ENCODE measurements at regions of chr5 and their contacts with region 1.

Region 1: DNA sequence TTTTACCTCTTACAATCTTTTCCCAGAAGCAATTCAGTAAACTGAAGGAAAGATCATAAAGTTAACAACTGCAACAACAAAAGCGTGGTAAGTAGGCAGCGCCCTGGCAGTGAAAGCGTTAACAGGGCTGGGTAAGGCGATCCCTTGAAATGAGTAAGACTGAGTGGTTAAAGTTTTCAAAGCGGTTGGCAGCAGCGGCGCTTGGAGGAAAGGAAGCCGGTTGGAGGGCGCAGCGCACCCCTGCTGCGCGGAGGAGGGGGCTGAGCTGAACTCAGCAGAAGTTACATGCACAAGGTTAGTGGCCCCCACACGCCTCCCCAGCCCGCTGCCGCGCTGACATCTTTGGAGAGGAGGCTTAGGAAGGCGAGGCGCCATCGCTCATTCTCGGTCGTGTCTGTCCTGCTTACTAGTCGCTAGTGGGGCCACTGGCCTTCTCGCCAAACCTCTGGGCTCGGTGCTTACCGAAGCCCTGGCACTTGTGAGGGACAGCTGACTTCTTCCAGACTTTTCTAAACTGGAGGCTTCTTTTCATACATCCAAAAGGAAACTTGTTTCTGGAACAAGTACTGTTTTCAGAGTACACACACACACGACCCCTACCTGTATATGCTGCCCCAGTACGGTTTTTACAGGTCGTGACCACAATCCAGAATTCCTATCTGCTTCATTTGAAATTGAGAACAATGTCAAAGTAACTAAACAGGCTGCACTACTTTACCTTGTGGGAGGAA is at the start of gene SH3RF2:
- DNase-seq: peak; percentile 85
- ATAC-seq: peak; percentile 54
- H3K4me3 ChIP-seq: peak within 1 kb of the TSS; percentile 60
- H3K27ac ChIP-seq: peak within 1 kb of the TSS; percentile 86
- H3K4me1 ChIP-seq: peaks cover 61 to 100% of the 10 kb centered on the region in 2 experiments
- H3K27me3 ChIP-seq: no peaks in the 10 kb centered on the region
- CTCF ChIP-seq: no peak
- POLR2A ChIP-seq: peak; percentile 69
- RAD21 ChIP-seq: no peak
- total RNA-seq, gene SH3RF2: 14.3 TPM

Region 2: DNA sequence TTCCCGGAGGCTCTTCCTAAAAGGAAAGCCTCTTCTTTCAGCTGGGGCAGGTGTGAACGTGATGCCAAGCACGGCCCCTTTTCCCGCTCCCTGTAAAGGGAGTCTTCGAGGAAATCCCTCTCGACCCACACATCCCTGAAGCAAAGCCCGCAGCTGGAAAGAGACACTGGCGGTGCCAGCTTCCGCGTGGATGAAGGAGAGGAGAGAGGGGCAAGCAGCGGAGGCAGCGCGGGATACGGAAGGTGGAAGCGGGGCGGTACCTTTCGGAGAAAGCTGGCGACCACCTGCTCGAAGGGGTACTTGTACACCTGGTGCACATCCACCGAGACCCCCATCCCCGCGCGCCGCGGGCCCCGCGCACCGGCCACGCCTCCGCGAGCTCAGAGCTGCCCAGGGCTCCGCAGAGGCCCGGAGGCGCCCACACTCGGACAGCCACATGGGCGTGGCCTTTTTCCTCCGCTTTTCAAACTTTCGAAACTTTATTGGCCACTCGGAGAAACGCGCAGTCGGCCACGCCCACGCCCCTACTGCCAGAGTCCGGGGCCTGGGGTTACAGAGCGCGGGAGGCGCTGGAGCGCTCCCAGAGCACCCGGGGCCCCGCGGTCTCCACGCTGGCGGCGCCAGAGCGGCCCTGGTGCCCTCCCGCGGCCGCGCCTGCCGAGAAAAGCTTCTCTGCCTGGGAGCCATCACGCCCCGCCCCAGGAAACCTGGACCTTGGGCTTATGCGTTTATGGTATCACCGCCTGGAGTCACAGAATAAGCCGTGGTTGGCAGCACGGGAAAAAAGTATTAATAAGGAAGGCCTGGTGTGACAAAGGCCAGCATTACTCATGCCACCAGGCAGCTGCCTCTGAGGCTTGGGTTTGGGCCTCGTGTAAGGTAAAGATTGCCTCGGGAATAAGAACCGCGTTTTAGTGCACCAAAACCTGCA is 101.4 kb before region 1 on chr5 and contains the start of gene PRELID2:
- CTCF ChIA-PET with region 1: no interaction called
- POLR2A ChIA-PET with region 1: no interaction called
- RAD21 ChIA-PET with region 1: no interaction called
- intact Hi-C with region 1: loop called (anchors 10 kb)
- DNase-seq: peak; percentile 79
- ATAC-seq: peak; percentile 90
- H3K4me3 ChIP-seq: peak within 1 kb of the TSS; percentile 75 to 78
- H3K27ac ChIP-seq: peak within 1 kb of the TSS; percentile 38
- H3K4me1 ChIP-seq: peaks cover 16 to 32% of the 10 kb centered on the region in 2 experiments
- H3K27me3 ChIP-seq: no peaks in the 10 kb centered on the region
- CTCF ChIP-seq: 0 out of 6 replicates have a peak, but pooled peaks of 1 of the 3 experiments have one; percentile 2
- POLR2A ChIP-seq: peak; percentile 31
- RAD21 ChIP-seq: peak; percentile 42; the same call in 1 of the 2 replicates
- total RNA-seq, gene PRELID2: 20.1 TPM

Region 3: DNA sequence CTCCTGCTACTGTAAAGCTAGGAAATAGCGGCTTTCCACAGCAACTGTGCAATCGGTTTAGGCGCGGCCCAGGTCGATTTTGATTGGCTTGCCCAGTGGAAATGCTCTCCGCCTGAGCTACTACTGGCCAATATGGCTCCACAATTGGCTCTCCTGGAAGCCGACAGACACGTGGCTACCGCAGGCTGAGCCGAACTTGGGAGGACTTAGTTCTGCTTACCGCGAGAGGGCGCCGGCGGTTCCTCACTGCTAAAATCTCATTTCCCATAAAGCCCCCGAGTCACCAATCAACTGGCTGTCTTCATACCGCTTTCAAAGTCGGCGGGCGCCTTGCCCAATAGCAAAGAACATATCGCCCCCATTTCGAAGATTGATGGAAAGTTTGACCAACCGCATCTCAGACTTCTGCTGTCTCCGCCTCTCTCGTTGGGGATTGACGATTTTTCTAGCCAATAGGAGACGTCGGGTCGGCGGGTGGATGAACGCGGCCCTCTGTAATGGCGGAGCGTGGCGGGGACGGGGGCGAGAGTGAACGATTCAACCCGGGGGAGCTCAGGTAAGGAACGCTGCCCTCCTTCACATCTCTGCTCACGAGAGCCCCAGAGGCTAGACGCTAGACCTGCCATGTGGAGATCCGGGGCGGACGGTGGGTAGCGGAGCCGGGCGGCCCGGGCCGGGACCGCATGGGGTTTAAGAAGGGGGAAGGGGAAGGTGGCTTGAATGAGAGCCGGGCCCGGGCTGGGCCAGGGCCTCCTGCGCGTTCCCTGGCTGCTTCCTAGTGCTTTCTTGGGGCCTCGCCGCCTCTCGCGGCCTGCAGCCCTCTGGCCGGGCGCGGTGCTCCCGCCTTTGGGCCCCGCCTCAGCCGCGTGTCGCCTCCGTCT is 510.5 kb after region 1 on chr5 and contains the start of gene TCERG1:
- CTCF ChIA-PET with region 1: no interaction called
- POLR2A ChIA-PET with region 1: no interaction called
- RAD21 ChIA-PET with region 1: no interaction called
- intact Hi-C with region 1: loop called (anchors 10 kb)
- DNase-seq: peak; percentile 100
- ATAC-seq: peak; percentile 92
- H3K4me3 ChIP-seq: peak within 1 kb of the TSS; percentile 74 to 83
- H3K27ac ChIP-seq: peak within 1 kb of the TSS; percentile 80
- H3K4me1 ChIP-seq: peaks cover 13 to 27% of the 10 kb centered on the region in 2 experiments; a peak in 3 of 4 replicates
- H3K27me3 ChIP-seq: no peaks in the 10 kb centered on the region
- CTCF ChIP-seq: peak; percentile 47 to 70 (median 63)
- POLR2A ChIP-seq: peak; percentile 18
- RAD21 ChIP-seq: no peak
- total RNA-seq, gene TCERG1: 83.5 TPM

Measured in HCT116 (cell line).